ENCODE measurements at regions of chr6 and their contacts with region 1.

Region 1: DNA sequence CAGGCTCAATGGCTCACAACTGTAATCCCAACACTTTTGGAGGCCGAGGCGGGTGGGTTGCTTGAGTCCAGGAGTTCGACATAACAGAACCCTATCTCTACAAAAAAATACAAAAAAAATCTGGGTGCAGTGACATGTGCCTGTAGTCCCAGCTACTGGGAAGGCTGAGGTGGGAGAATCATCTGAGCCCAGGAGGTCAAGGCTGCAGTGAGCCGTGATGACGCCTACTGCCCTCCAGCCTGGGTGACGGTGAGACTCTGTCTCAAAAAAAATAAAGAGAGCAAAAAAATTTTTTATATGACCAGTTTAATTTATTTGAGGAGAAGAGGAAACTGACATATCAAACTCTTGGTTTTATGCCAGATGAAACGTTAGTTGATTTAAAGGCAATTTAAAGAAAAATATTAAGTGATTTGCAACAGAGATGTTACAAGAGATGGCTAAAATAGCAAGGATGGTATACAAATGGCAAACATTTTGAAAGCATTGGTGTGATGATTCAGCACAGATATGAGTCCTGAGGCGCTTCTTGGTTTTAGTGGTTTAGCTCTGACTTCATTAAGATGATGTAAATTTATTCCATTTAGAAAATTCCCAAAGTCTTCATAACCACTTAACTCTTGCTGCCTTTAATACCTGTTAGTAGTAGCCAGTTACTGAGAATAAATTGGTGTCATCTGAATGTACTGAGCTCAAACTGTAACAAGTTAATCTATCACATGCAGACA is 17.7 kb downstream of the GTF2H5 start:
- DNase-seq: no peak
- H3K4me3 Mint-ChIP-seq: no peak overlapping the region
- H3K27ac Mint-ChIP-seq: peak overlapping the region; percentile 36
- H3K4me1 Mint-ChIP-seq: peaks cover 30% of the 10 kb centered on the region
- H3K27me3 Mint-ChIP-seq: no peaks in the 10 kb centered on the region

Region 2: DNA sequence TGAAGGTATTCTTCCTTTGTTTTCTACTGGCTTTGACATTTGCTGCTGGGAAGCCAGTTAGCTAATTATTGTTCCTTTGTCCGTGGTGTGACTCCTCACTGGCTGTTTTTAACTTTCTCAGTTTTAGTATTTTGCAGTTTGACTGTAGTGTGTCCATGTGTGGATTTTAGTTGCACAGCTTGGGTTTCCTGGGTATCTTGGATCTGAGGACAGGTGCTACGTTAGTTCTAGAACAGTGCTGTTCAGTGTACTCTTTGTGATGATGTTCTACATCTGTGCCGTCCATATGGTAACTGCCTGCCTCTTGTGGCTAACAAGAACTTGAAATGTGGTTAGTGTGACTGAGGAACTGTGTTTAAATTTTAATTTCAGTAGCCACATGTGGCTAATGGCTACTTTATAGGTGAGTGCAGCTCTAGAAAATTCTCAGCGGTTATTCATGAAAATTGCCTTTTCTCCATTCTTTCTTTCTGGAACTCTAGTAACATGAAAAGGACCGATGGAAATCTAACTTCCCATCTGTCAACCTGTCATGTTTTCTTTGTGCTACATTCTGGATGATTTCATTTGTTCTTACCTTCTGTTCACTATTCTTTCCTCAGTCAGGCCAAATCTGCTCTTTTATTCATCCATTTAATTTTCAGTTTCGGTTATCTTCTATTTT is 355.4 kb before region 1 on chr6:
- intact Hi-C with region 1: loop called (anchors 10 kb)
- DNase-seq: no peak
- H3K4me3 Mint-ChIP-seq: no peak overlapping the region
- H3K27ac Mint-ChIP-seq: peak overlapping the region; percentile 45
- H3K4me1 Mint-ChIP-seq: peaks cover 67% of the 10 kb centered on the region
- H3K27me3 Mint-ChIP-seq: no peaks in the 10 kb centered on the region

Region 3: DNA sequence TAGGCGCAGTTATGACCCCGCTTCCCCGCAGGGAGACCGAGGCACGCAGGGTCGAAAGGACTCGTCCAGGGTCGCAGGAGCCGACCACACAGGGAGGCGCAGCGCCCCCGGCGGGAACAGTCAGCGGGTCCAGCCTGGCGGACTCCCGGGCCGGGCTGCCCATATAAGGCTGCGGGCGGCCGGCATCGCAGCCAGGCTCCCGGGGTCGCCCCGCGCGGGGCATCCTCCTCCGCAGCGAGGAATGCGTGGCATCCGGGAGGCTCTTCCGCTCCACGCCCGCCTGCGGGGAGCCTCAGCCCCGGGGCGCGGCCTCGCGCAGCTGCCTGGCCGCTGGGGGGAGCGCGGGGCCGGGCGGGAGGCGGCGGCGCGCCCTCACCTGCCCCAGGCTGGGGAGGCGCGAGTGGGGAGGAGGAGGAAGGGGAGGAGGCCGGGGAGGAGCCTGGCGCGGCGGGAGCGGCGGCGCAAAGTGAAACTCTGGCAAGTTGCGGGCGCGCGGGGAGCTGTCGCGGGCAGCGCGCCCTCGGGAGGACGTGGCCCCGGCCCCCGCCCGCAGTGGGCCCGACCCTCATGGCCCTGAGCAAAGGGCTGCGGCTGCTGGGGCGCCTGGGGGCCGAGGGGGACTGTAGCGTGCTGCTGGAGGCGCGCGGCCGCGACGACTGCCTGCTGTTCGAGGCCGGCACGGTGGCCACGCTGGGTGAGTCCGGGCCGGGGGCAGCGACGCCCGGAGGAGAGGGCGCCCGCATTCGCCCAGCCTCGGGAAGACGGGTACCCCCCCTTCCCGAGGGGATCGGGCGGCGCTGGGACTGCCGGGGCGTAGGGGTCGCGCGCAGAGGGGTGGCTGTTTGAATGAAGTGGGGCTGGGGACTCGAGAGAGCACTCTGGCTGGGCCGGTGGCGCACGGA is 204.2 kb before region 1 on chr6 and contains the start of gene SYNJ2:
- intact Hi-C with region 1: no loop called
- DNase-seq: peak; percentile 85
- H3K4me3 Mint-ChIP-seq: peak within 1 kb of the TSS; percentile 95
- H3K27ac Mint-ChIP-seq: peak within 1 kb of the TSS; percentile 84
- H3K4me1 Mint-ChIP-seq: peaks cover 49% of the 10 kb centered on the region
- H3K27me3 Mint-ChIP-seq: peaks cover 10% of the 10 kb centered on the region
- total RNA-seq, gene SYNJ2: 29.0 and 31.2 TPM in 2 replicates

Region 4: DNA sequence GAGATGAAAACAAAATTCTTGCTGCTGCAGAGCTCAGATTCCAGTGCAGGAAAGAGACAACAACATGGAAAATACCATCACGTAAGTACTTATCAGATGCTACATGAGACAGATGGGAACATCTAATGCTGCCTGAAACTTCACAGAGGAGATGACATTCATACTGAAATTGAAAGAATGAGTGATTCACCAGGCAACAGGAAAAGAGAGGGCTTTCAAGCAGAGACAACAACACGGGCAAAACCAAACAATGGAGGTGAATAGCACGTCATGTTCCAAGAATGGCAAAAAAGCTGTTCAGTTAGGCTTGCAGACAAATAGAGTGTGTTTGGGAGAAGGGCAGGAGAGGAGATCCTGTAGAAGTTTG is 21.5 kb after region 1 on chr6:
- intact Hi-C with region 1: loop called (anchors 1 kb)
- DNase-seq: peak; percentile 68
- H3K4me3 Mint-ChIP-seq: peak overlapping the region; percentile 56
- H3K27ac Mint-ChIP-seq: peak overlapping the region; percentile 96
- H3K4me1 Mint-ChIP-seq: peaks cover 63% of the 10 kb centered on the region
- H3K27me3 Mint-ChIP-seq: no peaks in the 10 kb centered on the region